ENCODE measurements at regions of chr5 and their contacts with region 1.

Region 1: DNA sequence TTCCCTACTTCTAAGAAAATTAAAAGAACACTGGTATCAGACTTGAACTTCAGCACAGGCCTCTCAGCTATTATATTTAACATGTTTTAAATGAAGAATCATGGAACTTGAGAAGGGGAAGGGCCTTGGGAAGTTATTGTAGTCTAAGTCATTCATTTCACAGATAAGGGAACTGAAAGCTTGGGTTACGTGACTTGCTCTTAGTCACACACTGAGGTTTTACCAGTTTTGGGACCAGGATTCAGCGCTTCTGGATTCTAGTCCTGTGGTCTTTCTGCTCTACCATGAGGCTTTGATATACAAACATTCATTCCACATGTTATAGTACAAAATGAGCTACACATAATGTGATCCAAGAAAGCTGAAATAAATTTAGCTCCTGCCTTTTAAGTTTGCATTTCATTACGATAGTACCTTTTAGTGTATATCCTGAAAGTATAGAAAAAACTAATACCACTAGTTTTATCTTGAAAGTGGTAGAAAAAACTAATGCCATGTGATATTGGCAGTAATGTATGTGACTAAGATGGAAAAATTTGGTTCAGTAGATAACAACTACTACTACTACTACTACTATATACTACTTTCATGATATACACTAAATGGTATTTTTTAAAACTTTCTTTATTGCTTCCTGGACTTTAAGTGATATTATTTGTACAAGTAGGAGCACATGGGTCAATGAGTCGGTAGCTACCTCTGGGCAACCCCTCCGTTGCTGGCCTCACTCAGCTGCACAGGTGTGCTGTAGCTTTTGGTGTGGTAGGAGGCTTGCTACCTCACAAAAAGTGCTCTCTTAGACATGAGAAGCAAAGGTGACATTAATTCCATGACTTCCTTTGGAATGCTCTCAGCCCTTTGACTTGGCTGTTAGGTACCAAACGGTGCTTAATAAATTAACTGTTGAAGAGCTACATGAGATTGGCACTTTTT is 40.7 kb downstream of the F2RL2 start:
- DNase-seq: no peak
- H3K4me3 ChIP-seq: no peak overlapping the region
- H3K27ac ChIP-seq: no peak overlapping the region
- H3K4me1 ChIP-seq: peaks cover 0 to 5% (median 3%) of the 10 kb centered on the region in 4 experiments; a peak in 4 of 7 replicates
- H3K27me3 ChIP-seq: no peaks in the 10 kb centered on the region
- CTCF ChIP-seq: no peak
- EP300 ChIP-seq: no peak
- POLR2A ChIP-seq: no peak
- RAD21 ChIP-seq: no peak

Region 2: DNA sequence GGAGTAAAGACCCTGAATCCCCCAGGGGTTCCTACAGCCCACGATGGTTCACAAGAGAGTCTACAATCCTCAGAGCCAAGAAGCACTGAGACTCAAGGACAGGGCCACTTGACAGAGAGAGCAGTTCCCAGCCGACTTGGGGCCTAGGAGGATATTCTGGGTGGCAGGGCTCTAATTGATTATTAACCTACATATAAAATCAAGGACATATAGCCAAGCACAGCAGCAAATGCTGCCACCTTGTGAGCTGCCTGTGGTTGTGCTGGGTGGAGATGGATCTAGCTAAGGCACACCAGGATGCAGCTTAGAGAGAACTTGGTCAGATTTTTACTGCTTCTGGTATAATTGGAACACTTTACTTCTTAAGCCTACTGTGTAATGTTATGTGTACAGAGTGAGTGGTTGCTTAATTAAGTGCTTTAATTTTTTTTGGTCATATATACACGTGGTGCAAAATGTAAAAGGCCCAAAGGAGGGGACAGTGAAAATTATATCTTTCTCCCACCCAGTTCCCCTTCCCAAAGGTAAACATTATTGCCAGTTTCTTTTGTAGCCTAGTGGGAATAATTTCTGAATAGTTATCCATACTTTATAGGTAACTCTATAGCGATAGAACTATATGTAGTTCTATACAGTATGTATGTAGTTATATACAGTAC is 38.1 kb before region 1 on chr5:
- CTCF ChIA-PET with region 1: interaction called, 18 read pairs
- POLR2A ChIA-PET with region 1: no interaction called
- DNase-seq: no peak
- H3K4me3 ChIP-seq: no peak overlapping the region
- H3K27ac ChIP-seq: no peak overlapping the region
- H3K4me1 ChIP-seq: peaks cover 0 to 12% (median 1%) of the 10 kb centered on the region in 4 experiments; a peak in 3 of 7 replicates
- H3K27me3 ChIP-seq: no peaks in the 10 kb centered on the region
- CTCF ChIP-seq: peak; percentile 82 to 84 (median 84)
- EP300 ChIP-seq: no peak
- POLR2A ChIP-seq: no peak
- RAD21 ChIP-seq: peak; percentile 95 to 96

Region 3: GRCh38 chr5:76615759-76616158 is 33.3 kb after region 1 on chr5:
- CTCF ChIA-PET with region 1: no interaction called
- POLR2A ChIA-PET with region 1: no interaction called
- DNase-seq: no peak
- H3K4me3 ChIP-seq: no peak overlapping the region
- H3K27ac ChIP-seq: no peak overlapping the region
- H3K4me1 ChIP-seq: no peaks in the 10 kb centered on the region
- H3K27me3 ChIP-seq: no peaks in the 10 kb centered on the region
- CTCF ChIP-seq: no peak
- EP300 ChIP-seq: no peak
- POLR2A ChIP-seq: no peak
- RAD21 ChIP-seq: no peak

Measured in H1 (cell line).